ENCODE measurements at regions of chr11 and their contacts with region 1.

Region 1: GRCh38 chr11:67583247-67584204 is at the start of gene GSTP1:
- DNase-seq: peak; percentile 79 to 98 (median 90)

Region 2: GRCh38 chr11:67516806-67517205 is 66.7 kb before region 1 on chr11:
- intact Hi-C with region 1: loop called (anchors 10 kb)
- DNase-seq: peak in 1 of 10 donors; percentile 53

Region 3: DNA sequence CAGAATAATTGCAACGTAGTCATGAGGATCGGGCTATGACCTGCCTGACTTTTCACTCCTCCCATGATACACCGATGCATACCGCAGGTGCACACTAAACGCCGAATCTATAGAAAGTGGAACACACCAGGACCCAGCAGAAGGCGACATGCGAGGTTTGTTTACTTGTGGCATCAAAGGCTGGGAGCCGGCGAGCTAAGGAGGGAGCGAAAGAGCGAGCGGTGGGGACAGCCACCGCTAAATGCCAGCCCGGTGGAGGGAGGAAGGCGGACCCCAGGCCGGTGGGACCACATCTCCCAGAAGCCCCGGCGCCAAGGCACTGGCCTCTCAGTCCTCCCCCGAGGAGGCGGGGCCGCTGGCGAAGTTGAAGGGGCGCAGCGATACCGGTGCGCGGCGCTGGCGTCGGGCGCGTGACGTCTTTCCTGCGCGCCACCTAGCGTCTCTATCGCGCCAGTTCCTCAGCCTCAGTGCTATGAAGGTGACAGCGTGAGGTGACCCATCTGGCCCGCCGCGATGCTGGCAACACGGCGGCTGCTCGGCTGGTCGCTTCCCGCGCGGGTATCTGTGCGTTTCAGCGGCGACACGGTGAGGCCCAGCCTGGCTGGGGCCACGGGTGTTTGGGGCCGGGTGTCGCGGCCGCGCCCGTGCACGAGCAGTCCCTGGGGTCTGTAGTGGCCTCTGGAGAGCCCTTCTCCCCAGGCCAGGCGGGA is 23.1 kb after region 1 on chr11 and contains the start of gene NDUFV1:
- intact Hi-C with region 1: loop called (anchors 1 kb)
- DNase-seq: peak; percentile 94 to 100 (median 98)

Measured in posterior cingulate gyrus (tissue), 11 donors.